SK-N-SH (cell line): ENCODE measurements at regions of chrX and their contacts with region 1.

Region 1: GRCh38 chrX:74325130-74326059 is 21.4 kb downstream of the ZCCHC13 start:
- DNase-seq: peak; percentile 55
- H3K4me3 ChIP-seq: no peak overlapping the region
- H3K27ac ChIP-seq: no peak overlapping the region
- H3K4me1 ChIP-seq: no peaks in the 10 kb centered on the region
- H3K27me3 ChIP-seq: peaks cover 13% of the 10 kb centered on the region; the same call in 1 of the 2 replicates
- CTCF ChIP-seq: no peak
- EP300 ChIP-seq: no peak
- RAD21 ChIP-seq: peak; percentile 24; the same call in 1 of the 2 replicates

Region 2: DNA sequence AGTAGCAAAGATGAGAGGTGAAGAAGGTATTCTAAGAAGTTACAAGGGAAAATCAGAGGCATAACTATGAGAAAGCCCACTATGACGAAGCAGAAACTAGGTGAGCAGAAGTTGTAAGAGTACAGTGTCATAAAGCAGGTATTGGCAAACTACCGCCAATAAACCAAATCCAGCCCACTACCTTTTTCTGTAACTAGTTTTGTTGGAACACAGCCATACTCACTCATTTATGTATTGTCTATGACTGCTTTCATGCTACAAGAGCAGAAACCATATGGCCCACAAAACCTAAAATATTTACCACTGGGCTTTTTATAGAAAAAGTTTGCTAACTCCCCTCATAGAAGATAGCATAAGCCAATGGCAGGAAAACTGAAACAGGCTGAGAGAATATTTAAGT is 53.2 kb before region 1 on chrX:
- CTCF ChIA-PET with region 1: no interaction called
- POLR2A ChIA-PET with region 1: no interaction called
- DNase-seq: no peak
- H3K4me3 ChIP-seq: no peak overlapping the region
- H3K27ac ChIP-seq: no peak overlapping the region
- H3K4me1 ChIP-seq: no peaks in the 10 kb centered on the region
- H3K27me3 ChIP-seq: no peaks in the 10 kb centered on the region
- CTCF ChIP-seq: no peak
- EP300 ChIP-seq: no peak
- RAD21 ChIP-seq: no peak

Region 3: GRCh38 chrX:74343343-74344279 is 18.2 kb after region 1 on chrX:
- CTCF ChIA-PET with region 1: interaction called, 11 read pairs
- POLR2A ChIA-PET with region 1: no interaction called
- DNase-seq: peak; percentile 57
- H3K4me3 ChIP-seq: no peak overlapping the region
- H3K27ac ChIP-seq: no peak overlapping the region
- H3K4me1 ChIP-seq: no peaks in the 10 kb centered on the region
- H3K27me3 ChIP-seq: no peaks in the 10 kb centered on the region; the same call in 1 of the 2 replicates
- CTCF ChIP-seq: peak; percentile 76
- EP300 ChIP-seq: no peak
- RAD21 ChIP-seq: peak; percentile 84

Region 4: GRCh38 chrX:74506317-74507115 is 181.1 kb after region 1 on chrX:
- CTCF ChIA-PET with region 1: no interaction called
- POLR2A ChIA-PET with region 1: no interaction called
- DNase-seq: no peak
- H3K4me3 ChIP-seq: no peak overlapping the region
- H3K27ac ChIP-seq: no peak overlapping the region
- H3K4me1 ChIP-seq: no peaks in the 10 kb centered on the region
- H3K27me3 ChIP-seq: no peaks in the 10 kb centered on the region
- CTCF ChIP-seq: no peak
- EP300 ChIP-seq: no peak
- RAD21 ChIP-seq: no peak